ENCODE measurements at regions of chr19 and their contacts with region 1.

Region 1: GRCh38 chr19:44093931-44094765 is at the start of gene ZNF224:
- DNase-seq: peak; percentile 92
- ATAC-seq: peak; percentile 93
- H3K4me3 Mint-ChIP-seq: peak within 1 kb of the TSS; percentile 99
- H3K27ac Mint-ChIP-seq: peak within 1 kb of the TSS; percentile 95
- H3K4me1 Mint-ChIP-seq: peaks cover 11% of the 10 kb centered on the region
- H3K27me3 Mint-ChIP-seq: no peaks in the 10 kb centered on the region
- total RNA-seq, gene ZNF224: 12.6 to 13.9 TPM

Region 2: GRCh38 chr19:43826787-43827754 is 267.1 kb before region 1 on chr19 and contains the start of gene ZNF283:
- CTCF ChIA-PET with region 1: no interaction called
- POLR2A ChIA-PET with region 1: no interaction called
- intact Hi-C with region 1: loop called in 1 of 2 experiments (anchors 1 kb)
- DNase-seq: peak; percentile 92
- ATAC-seq: peak; percentile 99
- H3K4me3 Mint-ChIP-seq: peak within 1 kb of the TSS; percentile 87
- H3K27ac Mint-ChIP-seq: peak within 1 kb of the TSS; percentile 60
- H3K4me1 Mint-ChIP-seq: peaks cover 14% of the 10 kb centered on the region
- H3K27me3 Mint-ChIP-seq: peaks cover 5% of the 10 kb centered on the region
- total RNA-seq, gene ZNF283: 5.4 to 6.8 TPM

Region 3: GRCh38 chr19:43950834-43951645 is 143.1 kb before region 1 on chr19 and contains the start of gene ZNF221:
- CTCF ChIA-PET with region 1: no interaction called
- POLR2A ChIA-PET with region 1: no interaction called
- intact Hi-C with region 1: loop called in 1 of 2 experiments (anchors 1 kb)
- DNase-seq: peak; percentile 84
- ATAC-seq: peak; percentile 95
- H3K4me3 Mint-ChIP-seq: peak within 1 kb of the TSS; percentile 83
- H3K27ac Mint-ChIP-seq: peak within 1 kb of the TSS; percentile 85
- H3K4me1 Mint-ChIP-seq: peaks cover 6% of the 10 kb centered on the region
- H3K27me3 Mint-ChIP-seq: peaks cover 17% of the 10 kb centered on the region
- total RNA-seq, gene ZNF221: 1.8 to 1.9 TPM

Region 4: GRCh38 chr19:44025217-44025936 is 68.8 kb before region 1 on chr19 and contains the start of gene ZNF222:
- CTCF ChIA-PET with region 1: interaction called, 4 read pairs
- POLR2A ChIA-PET with region 1: no interaction called
- intact Hi-C with region 1: loop called (anchors 1 to 2 kb)
- DNase-seq: peak; percentile 90
- ATAC-seq: peak; percentile 99
- H3K4me3 Mint-ChIP-seq: peak within 1 kb of the TSS; percentile 94
- H3K27ac Mint-ChIP-seq: peak within 1 kb of the TSS; percentile 93
- H3K4me1 Mint-ChIP-seq: peaks cover 20% of the 10 kb centered on the region
- H3K27me3 Mint-ChIP-seq: peaks cover 2% of the 10 kb centered on the region
- total RNA-seq, gene ZNF222: 1.5 to 2.9 TPM

Region 5: GRCh38 chr19:44141191-44142058 is 47.3 kb after region 1 on chr19 and contains the start of gene ZNF234:
- CTCF ChIA-PET with region 1: no interaction called
- POLR2A ChIA-PET with region 1: no interaction called
- intact Hi-C with region 1: loop called in 1 of 2 experiments (anchors 1 kb)
- DNase-seq: peak; percentile 82
- ATAC-seq: peak; percentile 92
- H3K4me3 Mint-ChIP-seq: peak within 1 kb of the TSS; percentile 92
- H3K27ac Mint-ChIP-seq: peak within 1 kb of the TSS; percentile 94
- H3K4me1 Mint-ChIP-seq: peaks cover 12% of the 10 kb centered on the region
- H3K27me3 Mint-ChIP-seq: no peaks in the 10 kb centered on the region
- total RNA-seq, gene ZNF234: 7.9 to 10.4 TPM

Region 6: DNA sequence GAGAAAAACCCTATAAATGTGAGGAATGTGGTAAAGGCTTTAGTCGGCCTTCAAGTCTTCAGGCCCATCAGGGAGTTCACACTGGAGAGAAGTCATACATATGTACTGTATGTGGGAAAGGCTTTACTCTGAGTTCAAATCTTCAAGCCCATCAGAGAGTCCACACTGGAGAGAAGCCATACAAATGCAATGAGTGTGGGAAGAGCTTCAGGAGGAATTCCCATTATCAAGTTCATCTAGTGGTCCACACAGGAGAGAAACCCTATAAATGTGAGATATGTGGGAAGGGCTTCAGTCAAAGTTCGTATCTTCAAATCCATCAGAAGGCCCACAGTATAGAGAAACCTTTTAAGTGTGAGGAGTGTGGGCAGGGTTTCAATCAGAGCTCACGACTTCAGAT is 82.4 kb after region 1 on chr19:
- CTCF ChIA-PET with region 1: no interaction called
- POLR2A ChIA-PET with region 1: no interaction called
- intact Hi-C with region 1: no loop called
- DNase-seq: no peak
- ATAC-seq: no peak
- H3K4me3 Mint-ChIP-seq: no peak overlapping the region
- H3K27ac Mint-ChIP-seq: no peak overlapping the region
- H3K4me1 Mint-ChIP-seq: no peaks in the 10 kb centered on the region
- H3K27me3 Mint-ChIP-seq: no peaks in the 10 kb centered on the region

Region 7: DNA sequence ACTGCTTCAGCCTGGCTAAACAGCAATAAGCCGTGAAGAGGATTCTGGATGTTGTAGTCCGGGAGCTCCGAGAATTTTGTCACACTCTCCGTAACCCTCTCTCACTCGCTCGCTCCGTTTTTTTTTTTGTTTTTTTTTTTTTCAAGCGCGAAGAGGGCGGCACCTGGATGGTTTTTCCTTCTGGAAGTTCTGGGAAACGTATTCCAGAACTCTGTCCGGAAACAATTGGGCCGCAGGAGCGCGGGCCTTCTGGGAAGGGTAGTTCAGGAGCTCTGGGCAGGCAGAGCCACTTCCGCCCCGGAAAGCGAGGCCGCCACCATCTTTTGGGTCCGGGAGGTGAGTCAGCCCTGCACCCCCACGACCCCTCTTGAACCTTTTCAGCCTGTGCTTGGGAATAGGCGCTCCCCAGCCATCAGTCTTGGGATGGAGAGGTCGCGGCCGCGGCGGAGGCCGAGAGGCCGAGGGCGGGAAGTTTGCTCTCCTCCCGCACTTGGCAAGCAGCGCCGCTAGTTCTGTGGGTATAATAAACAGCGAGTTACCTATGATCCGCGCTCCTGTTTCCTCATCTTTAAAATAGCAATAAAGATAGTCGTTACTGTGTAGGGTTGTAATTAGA is 118.2 kb after region 1 on chr19 and contains the start of gene ZNF227:
- CTCF ChIA-PET with region 1: interaction called, 3 read pairs
- POLR2A ChIA-PET with region 1: no interaction called
- intact Hi-C with region 1: loop called (anchors 1 to 2 kb)
- DNase-seq: peak; percentile 90
- ATAC-seq: peak; percentile 98
- H3K4me3 Mint-ChIP-seq: peak within 1 kb of the TSS; percentile 90
- H3K27ac Mint-ChIP-seq: peak within 1 kb of the TSS; percentile 92
- H3K4me1 Mint-ChIP-seq: peaks cover 22% of the 10 kb centered on the region
- H3K27me3 Mint-ChIP-seq: no peaks in the 10 kb centered on the region
- total RNA-seq, gene ZNF227: 19.4 to 20.6 TPM

Measured in activated CD4-positive, alpha-beta T cell treated with anti-CD3 and anti-CD28 coated beads for 36 hours (primary cell).